Activated CD8-positive, alpha-beta T cell treated with anti-CD3 and anti-CD28 coated beads for 36 hours (primary cell): ENCODE measurements at regions of chr11 and their contacts with region 1.

Region 1: DNA sequence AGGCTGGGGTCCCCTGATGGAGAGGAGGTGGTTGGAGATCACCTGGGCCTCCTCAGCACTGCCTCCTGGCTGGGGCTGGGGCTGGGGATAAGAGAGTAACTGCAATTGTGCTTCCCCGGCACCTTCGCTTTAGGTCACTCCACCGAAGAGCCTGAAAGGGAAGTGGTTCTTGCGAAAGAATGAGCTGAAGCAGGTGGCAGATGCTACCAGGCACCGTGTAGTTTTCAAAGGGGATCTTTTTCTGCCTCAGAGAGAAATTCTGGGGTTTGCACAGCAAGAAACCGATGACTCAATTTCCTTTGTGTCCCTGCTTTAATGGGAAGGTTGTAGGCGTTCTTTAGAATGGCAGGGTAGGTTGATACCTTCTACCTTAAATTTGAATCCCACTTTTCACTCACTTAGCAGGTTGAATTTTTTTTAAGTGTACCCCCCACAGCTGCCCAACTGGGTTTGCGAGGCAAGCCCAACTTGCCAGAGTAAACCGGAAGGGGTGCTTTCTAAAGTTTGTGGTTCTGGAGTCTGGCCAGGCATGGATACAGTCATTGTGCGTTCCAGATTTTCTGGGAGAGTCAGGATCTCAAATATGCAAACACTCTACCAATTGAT is 5.3 kb downstream of the CD44 start:
- DNase-seq: peak; percentile 85
- ATAC-seq: peak; percentile 52
- H3K4me3 Mint-ChIP-seq: peak overlapping the region; percentile 93
- H3K27ac Mint-ChIP-seq: peak overlapping the region; percentile 97
- H3K4me1 Mint-ChIP-seq: peaks cover 66% of the 10 kb centered on the region
- H3K27me3 Mint-ChIP-seq: no peaks in the 10 kb centered on the region
- CTCF ChIP-seq: no peak

Region 2: DNA sequence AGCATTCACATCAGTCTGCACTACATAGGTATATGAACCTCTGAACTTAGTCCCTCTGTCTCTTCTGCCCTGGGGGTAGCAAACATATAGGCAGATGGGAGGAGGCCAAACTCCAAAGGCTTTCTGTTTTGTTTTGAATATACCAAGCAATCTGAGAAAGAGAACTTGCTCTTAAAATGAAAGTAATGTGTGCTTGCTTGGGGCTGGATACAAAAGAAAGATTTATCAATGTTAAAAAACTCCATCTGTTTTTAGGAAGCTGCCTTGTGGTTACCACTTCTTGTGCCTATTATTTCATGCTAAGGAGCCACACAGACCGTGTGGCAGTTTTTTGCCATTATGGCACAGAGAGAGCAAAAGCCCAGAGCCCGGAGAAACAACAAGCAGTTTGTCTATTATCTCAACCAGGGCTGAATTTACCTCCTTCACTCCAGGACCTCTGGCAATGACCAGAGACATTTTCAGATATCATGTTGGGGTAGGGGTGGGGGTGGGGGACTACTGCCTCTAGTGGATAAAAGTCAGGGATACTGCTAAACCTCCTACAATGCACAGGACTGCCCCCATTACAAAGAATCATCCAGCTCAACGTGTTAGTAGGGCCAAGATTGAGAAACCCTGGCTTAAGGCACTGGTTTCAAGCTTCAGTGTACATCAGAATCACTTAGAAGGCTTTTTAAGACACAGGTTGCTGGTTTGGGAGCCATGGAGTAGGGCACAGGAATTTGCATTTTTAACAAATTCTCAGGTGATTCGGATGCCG is 352.3 kb before region 1 on chr11:
- CTCF ChIA-PET with region 1: no interaction called
- POLR2A ChIA-PET with region 1: no interaction called
- intact Hi-C with region 1: no loop called
- DNase-seq: no peak
- ATAC-seq: no peak
- H3K4me3 Mint-ChIP-seq: no peak overlapping the region
- H3K27ac Mint-ChIP-seq: no peak overlapping the region
- H3K4me1 Mint-ChIP-seq: no peaks in the 10 kb centered on the region
- H3K27me3 Mint-ChIP-seq: peaks cover 10% of the 10 kb centered on the region
- CTCF ChIP-seq: no peak

Region 3: DNA sequence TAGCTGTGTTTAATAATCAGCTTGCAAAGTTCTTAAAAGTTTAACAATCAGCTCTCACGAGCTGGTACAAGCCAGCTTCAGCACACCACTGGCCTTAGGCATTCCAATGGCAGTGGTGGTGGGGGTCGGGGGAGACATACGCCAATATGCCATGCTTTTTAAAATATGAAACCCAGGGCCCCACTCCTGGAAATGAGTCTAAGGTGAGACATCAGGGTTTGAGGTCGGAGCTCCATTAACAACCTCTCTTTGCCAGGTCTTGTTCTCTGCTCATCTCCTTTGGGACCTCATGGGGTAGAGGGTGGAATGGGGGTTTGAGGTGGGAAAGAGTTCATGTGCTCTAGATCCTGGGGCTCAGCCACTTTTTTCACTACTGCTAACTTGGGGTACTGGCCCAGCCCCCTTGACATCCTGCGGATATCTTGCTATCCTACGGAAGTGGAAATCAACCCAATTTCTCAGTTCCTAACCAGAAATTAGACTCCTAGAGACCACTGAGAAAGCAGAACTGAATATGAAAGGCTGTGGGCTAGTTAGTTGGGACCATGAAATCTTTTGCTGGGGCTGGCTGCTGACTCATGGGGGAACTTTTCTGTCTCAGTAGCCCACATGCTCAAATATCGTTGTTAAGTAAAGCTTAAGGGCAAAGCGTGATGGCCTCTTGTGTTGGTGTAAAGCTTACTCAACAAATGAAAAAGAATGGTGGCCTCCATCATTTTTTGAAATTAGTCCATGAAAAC is 137.7 kb before region 1 on chr11:
- CTCF ChIA-PET with region 1: interaction called, 6 read pairs
- POLR2A ChIA-PET with region 1: interaction called, 16 read pairs
- intact Hi-C with region 1: loop called (anchors 2 kb)
- DNase-seq: peak; percentile 77
- ATAC-seq: peak; percentile 87
- H3K4me3 Mint-ChIP-seq: no peak overlapping the region
- H3K27ac Mint-ChIP-seq: peak overlapping the region; percentile 24
- H3K4me1 Mint-ChIP-seq: peaks cover 60% of the 10 kb centered on the region
- H3K27me3 Mint-ChIP-seq: no peaks in the 10 kb centered on the region
- CTCF ChIP-seq: no peak

Region 4: DNA sequence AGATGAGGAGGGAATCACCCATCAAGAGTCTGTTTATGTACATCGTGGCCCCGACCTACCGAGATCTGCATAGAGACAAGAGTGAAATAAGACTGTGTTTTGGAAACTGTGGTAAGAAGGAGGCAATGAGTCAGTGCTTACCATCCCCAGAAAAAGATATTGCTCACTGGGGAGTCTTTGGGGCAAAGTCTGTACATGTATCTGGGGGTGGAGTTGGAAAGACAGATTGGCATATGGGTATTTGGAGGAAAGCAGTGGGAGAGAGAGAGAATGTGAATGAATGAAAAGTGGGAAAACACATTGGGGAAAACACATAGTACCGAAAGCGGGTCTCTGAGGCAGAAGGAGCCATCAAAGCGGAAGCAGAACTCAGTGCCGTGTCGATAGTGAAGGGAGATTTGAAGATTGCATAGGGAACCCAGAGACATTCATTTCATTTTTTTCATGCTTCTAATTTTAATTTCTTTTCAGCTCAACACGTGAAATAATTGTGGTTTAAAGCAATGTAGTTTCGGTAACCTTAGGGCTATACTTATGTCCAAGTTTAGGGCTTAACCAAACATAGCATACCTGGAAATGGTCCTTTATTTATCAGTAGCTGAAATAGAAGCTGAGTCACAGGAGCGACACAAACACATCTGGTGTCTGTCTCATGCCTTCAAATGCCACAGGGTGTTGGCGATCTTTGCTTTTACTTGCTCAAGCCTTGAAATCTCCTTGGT is 103.9 kb before region 1 on chr11:
- CTCF ChIA-PET with region 1: interaction called, 6 read pairs
- POLR2A ChIA-PET with region 1: interaction called, 12 read pairs
- intact Hi-C with region 1: loop called (anchors 10 kb)
- DNase-seq: peak; percentile 84
- ATAC-seq: peak; percentile 83
- H3K4me3 Mint-ChIP-seq: peak overlapping the region; percentile 63
- H3K27ac Mint-ChIP-seq: peak overlapping the region; percentile 91
- H3K4me1 Mint-ChIP-seq: peaks cover 71% of the 10 kb centered on the region
- H3K27me3 Mint-ChIP-seq: no peaks in the 10 kb centered on the region
- CTCF ChIP-seq: no peak

Region 5: DNA sequence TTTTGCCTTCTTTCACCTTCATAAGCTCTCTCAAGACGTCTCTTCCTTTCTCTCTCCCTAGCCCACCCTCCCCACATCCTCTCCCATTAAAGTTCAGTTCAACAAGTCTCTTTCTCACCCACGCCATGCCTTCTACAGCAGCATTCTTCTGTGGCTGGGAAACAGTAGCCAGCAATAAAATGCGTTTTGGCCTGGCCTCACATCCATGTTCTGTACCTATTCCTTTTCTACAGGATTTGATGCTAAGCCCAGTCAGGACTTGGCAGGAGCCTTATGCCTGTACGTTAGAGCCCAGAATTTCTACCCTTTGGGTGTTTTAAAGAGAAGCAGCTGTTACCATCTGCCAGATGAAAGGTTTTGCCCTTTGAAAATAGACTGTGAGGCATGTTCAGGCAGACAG is 12.4 kb before region 1 on chr11:
- CTCF ChIA-PET with region 1: interaction called, 10 read pairs
- POLR2A ChIA-PET with region 1: interaction called, 35 read pairs
- intact Hi-C with region 1: no loop called
- DNase-seq: peak; percentile 45
- ATAC-seq: no peak
- H3K4me3 Mint-ChIP-seq: no peak overlapping the region
- H3K27ac Mint-ChIP-seq: peak overlapping the region; percentile 22
- H3K4me1 Mint-ChIP-seq: peaks cover 54% of the 10 kb centered on the region
- H3K27me3 Mint-ChIP-seq: no peaks in the 10 kb centered on the region
- CTCF ChIP-seq: no peak

Region 6: DNA sequence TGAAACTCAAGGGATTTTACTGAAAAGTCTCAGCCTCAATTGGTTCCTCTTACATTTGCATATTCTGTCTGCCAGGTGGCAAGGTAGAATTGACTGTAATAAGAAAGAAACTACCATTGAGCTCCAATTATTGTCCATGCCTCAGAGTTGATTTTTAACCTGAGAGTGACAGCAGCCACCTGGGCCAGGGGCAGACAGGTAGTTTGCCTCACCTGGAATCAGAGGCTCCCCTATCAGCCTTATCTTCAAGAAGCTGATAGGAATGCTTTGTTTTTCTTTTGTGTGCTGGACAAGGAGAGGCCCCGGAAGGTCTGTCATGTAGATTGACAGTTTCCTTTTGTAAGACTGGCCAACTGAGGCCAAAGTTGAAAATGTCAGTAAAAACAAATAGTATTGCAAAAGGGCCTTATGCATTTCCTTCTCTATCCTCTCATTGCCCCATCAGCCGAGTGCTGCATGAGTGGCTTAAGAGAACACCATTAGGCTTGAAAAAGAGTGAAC is 28.8 kb after region 1 on chr11:
- CTCF ChIA-PET with region 1: interaction called, 94 read pairs
- POLR2A ChIA-PET with region 1: interaction called, 203 read pairs
- intact Hi-C with region 1: loop called (anchors 2 kb)
- DNase-seq: no peak
- ATAC-seq: no peak
- H3K4me3 Mint-ChIP-seq: no peak overlapping the region
- H3K27ac Mint-ChIP-seq: peak overlapping the region; percentile 84
- H3K4me1 Mint-ChIP-seq: peaks cover 94% of the 10 kb centered on the region
- H3K27me3 Mint-ChIP-seq: no peaks in the 10 kb centered on the region
- CTCF ChIP-seq: no peak

Region 7: GRCh38 chr11:35391922-35392813 is 247.9 kb after region 1 on chr11:
- CTCF ChIA-PET with region 1: no interaction called
- POLR2A ChIA-PET with region 1: no interaction called
- intact Hi-C with region 1: loop called (anchors 5 kb)
- DNase-seq: peak; percentile 88
- ATAC-seq: peak; percentile 81
- H3K4me3 Mint-ChIP-seq: no peak overlapping the region
- H3K27ac Mint-ChIP-seq: no peak overlapping the region
- H3K4me1 Mint-ChIP-seq: peaks cover 25% of the 10 kb centered on the region
- H3K27me3 Mint-ChIP-seq: no peaks in the 10 kb centered on the region
- CTCF ChIP-seq: peak; percentile 99